Posterior cingulate gyrus (tissue), 11 donors: ENCODE measurements at regions of chr15 and their contacts with region 1.

Region 1: DNA sequence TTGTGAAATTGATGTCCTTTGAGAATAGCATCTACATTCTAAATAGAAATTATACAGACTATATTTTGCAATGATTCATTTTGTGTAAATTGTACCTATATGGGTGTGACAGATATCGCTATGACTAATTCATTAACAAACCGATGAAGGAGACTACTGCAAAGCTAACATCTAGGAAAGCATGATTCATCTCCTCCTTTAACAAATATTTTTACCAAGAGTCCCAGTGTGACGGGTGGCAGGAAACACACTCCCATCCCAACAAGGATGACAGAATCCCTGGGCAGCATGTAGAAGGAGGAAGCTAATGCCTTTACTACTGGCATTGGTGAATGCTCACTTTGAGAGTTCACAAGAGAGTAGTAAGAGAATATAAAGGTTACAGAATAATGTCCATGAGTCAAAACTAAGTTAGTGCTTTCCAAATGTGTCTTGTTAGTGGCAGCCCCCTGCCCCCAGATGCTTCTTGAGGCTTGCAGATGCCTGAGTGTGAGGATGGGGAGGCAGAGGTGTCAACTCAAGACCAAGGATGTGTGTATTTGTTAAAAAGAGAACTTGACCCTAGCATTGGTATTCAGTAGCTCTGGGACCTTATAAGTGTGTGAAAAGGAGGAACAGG is 180.6 kb downstream of the FMN1 start:
- DNase-seq: no peak

Region 2: DNA sequence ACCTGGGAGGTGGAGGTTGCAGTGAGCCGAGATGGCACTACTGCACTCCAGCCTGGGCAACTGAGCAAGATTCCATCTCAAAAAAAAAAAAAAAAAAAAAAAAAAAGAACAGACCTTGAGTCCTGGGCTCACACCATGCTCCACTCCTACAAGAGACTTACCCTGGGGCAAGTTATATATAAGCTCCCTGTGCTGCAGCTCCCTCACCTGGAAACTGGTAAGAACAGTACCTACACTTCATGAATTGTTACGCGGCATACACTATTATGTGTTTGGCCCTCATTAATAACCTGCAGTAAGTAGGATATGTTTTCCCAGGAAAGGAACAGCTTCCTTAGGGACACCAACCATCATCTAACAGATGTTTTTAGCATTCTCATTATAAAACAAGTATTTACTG is 61.0 kb after region 1 on chr15:
- intact Hi-C with region 1: loop called (anchors 10 kb)
- DNase-seq: no peak

Region 3: DNA sequence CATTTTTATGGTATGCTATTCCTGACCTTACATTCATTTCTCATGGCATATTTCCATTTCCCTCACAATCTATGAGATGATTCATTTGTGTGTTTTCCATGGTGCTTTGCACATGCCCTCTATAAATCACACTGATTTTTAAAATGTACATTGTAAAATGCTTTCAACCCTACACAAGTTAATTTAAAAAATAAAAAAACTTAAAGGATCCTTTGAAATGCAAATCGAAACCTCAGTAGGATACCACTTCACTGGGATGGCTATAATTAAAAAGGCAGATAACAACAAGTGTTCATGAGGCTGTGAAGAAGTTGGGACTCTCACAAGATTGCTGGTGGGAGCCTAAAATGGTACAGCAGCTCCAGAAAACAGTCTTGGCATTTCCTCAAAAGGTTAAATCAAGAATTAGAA is 97.1 kb after region 1 on chr15:
- intact Hi-C with region 1: no loop called
- DNase-seq: no peak

Region 4: GRCh38 chr15:33126559-33127290 is 112.8 kb after region 1 on chr15:
- intact Hi-C with region 1: no loop called
- DNase-seq: peak in 8 of 10 donors; percentile 30 to 89 (median 56)